BJ (cell line): ENCODE measurements at regions of chr2 and their contacts with region 1.

Region 1: GRCh38 chr2:149330126-149331022 is at the start of gene LYPD6:
- DNase-seq: peak; percentile 9
- H3K4me3 ChIP-seq: peak within 1 kb of the TSS; percentile 71
- H3K27me3 ChIP-seq: no peaks in the 10 kb centered on the region; the same call in 1 of the 2 replicates
- CTCF ChIP-seq: 0 out of 2 replicates have a peak, but pooled peaks have one; percentile 17
- polyA plus RNA-seq, gene LYPD6: 7.1 and 9.4 TPM in 2 replicates

Region 2: DNA sequence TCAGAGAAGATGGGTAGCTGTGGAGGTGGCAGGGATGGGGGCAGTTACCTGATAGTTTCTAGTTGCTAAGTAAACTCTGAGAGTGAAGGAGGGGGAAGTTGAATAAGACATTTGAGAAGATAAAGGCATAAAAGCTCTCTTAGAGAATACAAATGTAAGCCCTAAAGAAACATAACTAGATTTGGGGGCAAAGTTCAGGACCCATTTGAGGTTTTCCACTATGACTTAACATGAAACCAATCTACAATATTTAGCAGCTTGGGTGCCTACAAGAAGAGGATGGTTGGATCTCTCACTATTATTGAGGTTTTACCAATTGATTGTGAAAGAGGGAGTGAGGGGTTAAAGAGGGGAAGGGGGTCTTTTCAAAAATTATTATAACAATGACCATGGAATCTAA is 34.3 kb before region 1 on chr2:
- CTCF ChIA-PET with region 1: no interaction called
- POLR2A ChIA-PET with region 1: no interaction called
- DNase-seq: no peak
- H3K4me3 ChIP-seq: no peak overlapping the region
- H3K27me3 ChIP-seq: no peaks in the 10 kb centered on the region; the same call in 1 of the 2 replicates
- CTCF ChIP-seq: no peak

Region 3: DNA sequence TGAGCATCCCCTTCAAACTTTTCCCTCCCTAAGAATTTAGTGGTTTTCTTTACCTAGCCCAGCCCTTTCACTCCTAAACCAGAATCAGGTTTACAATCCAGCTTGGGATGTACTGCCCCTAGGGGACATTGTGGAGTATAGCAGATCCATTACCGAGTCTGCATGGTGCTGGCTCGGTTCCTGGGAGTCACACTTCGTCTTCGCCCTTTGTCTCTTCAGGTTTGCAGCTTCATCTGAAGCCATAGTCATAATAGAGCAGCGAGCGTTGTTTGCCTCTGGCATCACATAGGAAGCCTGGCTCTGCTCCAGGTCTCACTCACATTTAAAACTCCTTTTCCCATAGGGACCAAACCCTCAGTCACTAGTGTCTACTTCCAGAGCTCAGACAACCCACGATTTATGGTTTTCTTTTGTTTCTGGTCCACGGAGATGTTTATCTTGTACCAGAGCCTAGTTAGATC is 16.8 kb before region 1 on chr2:
- CTCF ChIA-PET with region 1: interaction called, 11 read pairs
- POLR2A ChIA-PET with region 1: no interaction called
- DNase-seq: no peak
- H3K4me3 ChIP-seq: no peak overlapping the region
- H3K27me3 ChIP-seq: no peaks in the 10 kb centered on the region
- CTCF ChIP-seq: peak; percentile 78

Region 4: DNA sequence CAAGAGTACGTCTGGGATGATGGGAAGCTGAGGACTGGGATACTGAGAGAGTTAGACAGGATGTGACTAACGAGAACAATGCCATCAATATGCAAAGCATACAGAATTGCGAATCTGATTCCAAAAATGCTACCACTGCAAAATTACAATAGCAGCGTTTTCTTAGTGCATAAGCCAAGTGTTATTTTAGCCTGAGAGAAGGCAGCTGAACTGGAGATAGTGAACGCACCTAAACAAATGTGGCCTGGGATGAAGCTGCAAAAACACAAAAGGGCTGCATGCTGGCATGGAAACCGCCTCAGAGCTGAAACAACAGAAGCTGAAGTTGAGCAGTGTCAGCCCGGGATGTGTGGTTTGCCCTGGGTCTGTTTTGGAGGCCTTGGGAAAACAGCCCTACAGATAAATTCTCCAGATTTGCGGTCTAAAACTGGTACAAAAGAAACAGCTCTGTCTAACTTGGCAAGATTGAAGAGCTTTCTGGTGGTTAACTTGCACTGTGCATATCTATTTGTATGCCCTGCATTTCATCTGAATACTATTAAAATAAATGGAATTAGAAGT is 45.5 kb after region 1 on chr2:
- CTCF ChIA-PET with region 1: no interaction called
- POLR2A ChIA-PET with region 1: no interaction called
- DNase-seq: no peak
- H3K4me3 ChIP-seq: no peak overlapping the region
- H3K27me3 ChIP-seq: no peaks in the 10 kb centered on the region
- CTCF ChIP-seq: no peak

Region 5: DNA sequence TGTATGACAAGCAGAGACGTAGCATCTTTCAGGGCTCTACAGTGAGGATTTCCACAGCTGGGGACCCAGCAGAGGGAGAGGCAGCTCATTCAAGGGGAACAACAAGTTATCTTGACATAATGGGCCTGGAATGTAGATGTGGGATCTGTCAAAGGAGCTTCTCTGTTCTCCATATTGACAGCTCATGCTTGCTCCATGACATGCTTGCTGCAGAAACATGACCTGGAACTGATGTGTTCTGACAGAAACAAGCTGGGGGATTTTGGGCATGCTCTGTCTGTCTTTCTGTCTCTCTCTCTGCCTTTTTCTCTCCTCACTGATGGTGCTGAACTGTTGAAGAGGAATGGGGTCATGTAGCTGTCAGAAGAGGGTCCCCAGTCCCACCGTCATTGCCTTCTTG is 177.6 kb after region 1 on chr2:
- CTCF ChIA-PET with region 1: no interaction called
- POLR2A ChIA-PET with region 1: interaction called, 14 read pairs
- DNase-seq: no peak
- H3K4me3 ChIP-seq: no peak overlapping the region
- H3K27me3 ChIP-seq: no peaks in the 10 kb centered on the region; the same call in 1 of the 2 replicates
- CTCF ChIP-seq: no peak